Naive thymus-derived CD8-positive, alpha-beta T cell (primary cell): ENCODE measurements at regions of chr12 and their contacts with region 1.

Region 1: GRCh38 chr12:56724972-56725722 is at the start of gene NACA:
- DNase-seq: peak; percentile 90 to 99 (median 96)
- ATAC-seq: peak; percentile 91 to 92
- H3K4me3 Mint-ChIP-seq: peak within 1 kb of the TSS; percentile 92 to 98 (median 96)
- H3K27ac Mint-ChIP-seq: peak within 1 kb of the TSS; percentile 97 to 99 (median 98)
- H3K4me1 Mint-ChIP-seq: peaks cover 34 to 60% (median 53%) of the 10 kb centered on the region in 4 donors
- H3K27me3 Mint-ChIP-seq: no peaks in the 10 kb centered on the region
- polyA plus RNA-seq, gene NACA: 1,330 to 1,441 (median 1,344) TPM

Region 2: GRCh38 chr12:56636675-56637540 is 88.2 kb before region 1 on chr12:
- POLR2A ChIA-PET with region 1: interaction called, 16 read pairs
- DNase-seq: peak; percentile 94 to 99 (median 98)
- ATAC-seq: peak; percentile 64 to 80
- H3K4me3 Mint-ChIP-seq: peak overlapping the region; percentile 84 to 99 (median 96)
- H3K27ac Mint-ChIP-seq: peak overlapping the region; percentile 90 to 100 (median 98)
- H3K4me1 Mint-ChIP-seq: peaks cover 35 to 64% (median 54%) of the 10 kb centered on the region in 4 donors
- H3K27me3 Mint-ChIP-seq: no peaks in the 10 kb centered on the region

Region 3: GRCh38 chr12:56677680-56678079 is 47.5 kb before region 1 on chr12:
- POLR2A ChIA-PET with region 1: interaction called, 15 read pairs
- DNase-seq: no peak
- ATAC-seq: peak; percentile 8 to 22
- H3K4me3 Mint-ChIP-seq: peak overlapping the region in 5 of 10 donors; percentile 15 to 58 (median 39)
- H3K27ac Mint-ChIP-seq: peak overlapping the region; percentile 35 to 85 (median 78)
- H3K4me1 Mint-ChIP-seq: peaks cover 20 to 77% (median 60%) of the 10 kb centered on the region in 4 donors
- H3K27me3 Mint-ChIP-seq: no peaks in the 10 kb centered on the region

Region 4: GRCh38 chr12:56751712-56752598 is 26.8 kb after region 1 on chr12 and contains the start of gene PRIM1:
- POLR2A ChIA-PET with region 1: interaction called, 19 read pairs
- DNase-seq: peak; percentile 66 to 87 (median 80)
- ATAC-seq: peak; percentile 84 to 87
- H3K4me3 Mint-ChIP-seq: peak within 1 kb of the TSS; percentile 93 to 99 (median 95)
- H3K27ac Mint-ChIP-seq: peak within 1 kb of the TSS; percentile 80 to 97 (median 95)
- H3K4me1 Mint-ChIP-seq: peaks cover 18 to 44% (median 38%) of the 10 kb centered on the region in 4 donors
- H3K27me3 Mint-ChIP-seq: no peaks in the 10 kb centered on the region
- polyA plus RNA-seq, gene PRIM1: 43.8 to 49.1 (median 45.8) TPM

Region 5: GRCh38 chr12:56766535-56766934 is 41.4 kb after region 1 on chr12:
- POLR2A ChIA-PET with region 1: no interaction called
- DNase-seq: no peak
- ATAC-seq: no peak
- H3K4me3 Mint-ChIP-seq: peak overlapping the region in 1 of 10 donors; percentile 21
- H3K27ac Mint-ChIP-seq: peak overlapping the region in 1 of 10 donors; percentile 16
- H3K4me1 Mint-ChIP-seq: peaks cover 0 to 6% (median 0%) of the 10 kb centered on the region in 4 donors
- H3K27me3 Mint-ChIP-seq: no peaks in the 10 kb centered on the region